ENCODE measurements at regions of chr17 and their contacts with region 1.

Region 1: DNA sequence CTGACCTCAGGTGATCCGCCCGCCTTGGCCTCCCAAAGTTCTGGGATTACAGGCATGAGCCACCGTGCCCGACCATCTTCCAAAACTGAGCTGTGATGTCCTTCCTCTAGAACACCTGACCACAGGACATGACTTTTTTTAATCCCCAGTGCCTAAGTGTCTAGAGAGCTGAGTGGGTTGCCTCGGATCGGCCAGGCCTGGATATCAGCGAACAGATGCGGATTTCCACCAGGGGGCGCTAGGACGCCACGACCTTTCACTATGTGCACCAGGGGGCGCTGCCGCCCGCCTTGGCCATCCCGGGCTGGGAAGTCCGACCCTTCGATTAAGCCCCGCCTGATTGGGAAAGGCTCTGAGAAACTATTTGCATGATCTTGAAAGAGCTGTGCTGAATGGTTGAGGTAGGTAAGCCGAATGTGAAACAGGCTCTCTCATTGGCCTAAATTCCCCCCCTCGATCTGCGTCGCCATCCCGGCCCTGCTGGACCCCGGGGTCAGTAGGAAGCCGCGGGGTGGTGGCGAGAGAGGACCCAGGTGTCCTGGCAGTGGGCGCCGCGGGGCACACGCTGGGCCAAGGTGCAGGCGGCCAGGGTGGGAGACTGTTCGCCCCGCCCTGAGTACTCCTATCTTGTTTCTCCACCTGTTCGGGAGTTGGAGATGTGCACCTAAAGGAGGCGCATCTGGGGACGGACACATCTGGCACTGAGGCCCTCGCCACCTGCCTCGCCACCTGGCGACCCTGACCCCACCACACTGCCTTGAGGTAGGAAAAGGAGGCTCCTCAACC is at the start of gene ACBD4:
- DNase-seq: peak; percentile 98
- H3K4me3 Mint-ChIP-seq: peak within 1 kb of the TSS; percentile 83
- H3K27ac Mint-ChIP-seq: peak within 1 kb of the TSS; percentile 67
- H3K4me1 Mint-ChIP-seq: peaks cover 13% of the 10 kb centered on the region
- H3K27me3 Mint-ChIP-seq: peaks cover 5% of the 10 kb centered on the region
- total RNA-seq, gene ACBD4: 12.5 to 13.8 TPM

Region 2: DNA sequence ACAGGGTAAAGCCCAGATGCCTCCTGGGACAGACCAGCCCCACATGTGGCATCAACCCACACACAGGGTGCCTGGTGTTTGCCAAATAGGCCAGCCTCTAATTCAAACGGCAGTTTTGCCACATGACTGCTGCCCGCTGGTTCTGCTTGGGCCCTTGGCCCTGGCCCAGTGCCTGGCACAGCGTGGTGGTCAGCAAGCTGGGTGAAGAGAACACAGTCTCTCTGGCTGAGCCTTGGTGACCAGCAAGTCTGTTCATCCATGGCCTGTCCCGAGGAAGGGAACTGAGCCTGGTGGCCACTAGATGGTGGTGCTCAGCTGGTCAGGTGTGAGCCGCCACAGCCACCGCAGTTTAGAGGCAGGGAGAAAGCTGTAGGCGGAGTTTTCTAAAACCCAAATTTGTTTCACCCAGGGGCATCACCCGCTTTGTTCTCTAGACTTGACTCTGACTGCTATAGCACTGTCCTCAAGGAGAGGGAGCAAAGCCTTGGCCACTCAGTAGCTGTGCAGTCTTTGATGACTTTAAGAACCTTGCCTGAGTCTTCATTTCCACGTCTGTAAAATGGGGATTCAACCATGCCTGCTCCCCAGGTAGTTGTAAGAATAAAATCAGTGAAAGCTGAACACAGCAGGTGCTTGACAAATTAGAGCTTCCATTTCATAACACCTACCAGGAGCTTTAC is 215.4 kb before region 1 on chr17:
- CTCF ChIA-PET with region 1: interaction called, 8 read pairs
- POLR2A ChIA-PET with region 1: no interaction called
- intact Hi-C with region 1: loop called (anchors 5 kb)
- DNase-seq: peak; percentile 85
- H3K4me3 Mint-ChIP-seq: no peak overlapping the region
- H3K27ac Mint-ChIP-seq: no peak overlapping the region
- H3K4me1 Mint-ChIP-seq: peaks cover 5% of the 10 kb centered on the region
- H3K27me3 Mint-ChIP-seq: peaks cover 10% of the 10 kb centered on the region

Region 3: DNA sequence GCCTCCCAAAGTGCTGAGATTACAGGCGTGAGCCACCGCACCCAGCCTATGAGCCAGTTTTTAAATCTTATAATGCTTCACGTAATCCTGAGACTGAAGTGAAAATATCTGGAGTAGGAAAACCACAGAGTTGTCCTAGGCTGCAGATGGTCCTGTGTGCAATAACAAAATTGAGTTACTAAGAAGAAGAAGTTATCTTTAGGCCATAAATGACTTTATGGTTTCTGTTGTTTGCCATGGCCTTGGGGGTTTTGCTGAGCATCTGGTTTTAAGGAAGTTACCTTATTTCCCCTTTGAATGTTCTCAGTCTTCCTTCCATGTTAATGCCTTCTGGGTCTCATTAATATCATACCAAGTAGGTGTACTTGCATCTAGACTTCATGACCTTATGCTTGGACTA is 57.7 kb before region 1 on chr17:
- CTCF ChIA-PET with region 1: interaction called, 13 read pairs
- POLR2A ChIA-PET with region 1: no interaction called
- intact Hi-C with region 1: no loop called
- DNase-seq: no peak
- H3K4me3 Mint-ChIP-seq: no peak overlapping the region
- H3K27ac Mint-ChIP-seq: no peak overlapping the region
- H3K4me1 Mint-ChIP-seq: peaks cover 31% of the 10 kb centered on the region
- H3K27me3 Mint-ChIP-seq: no peaks in the 10 kb centered on the region

Region 4: DNA sequence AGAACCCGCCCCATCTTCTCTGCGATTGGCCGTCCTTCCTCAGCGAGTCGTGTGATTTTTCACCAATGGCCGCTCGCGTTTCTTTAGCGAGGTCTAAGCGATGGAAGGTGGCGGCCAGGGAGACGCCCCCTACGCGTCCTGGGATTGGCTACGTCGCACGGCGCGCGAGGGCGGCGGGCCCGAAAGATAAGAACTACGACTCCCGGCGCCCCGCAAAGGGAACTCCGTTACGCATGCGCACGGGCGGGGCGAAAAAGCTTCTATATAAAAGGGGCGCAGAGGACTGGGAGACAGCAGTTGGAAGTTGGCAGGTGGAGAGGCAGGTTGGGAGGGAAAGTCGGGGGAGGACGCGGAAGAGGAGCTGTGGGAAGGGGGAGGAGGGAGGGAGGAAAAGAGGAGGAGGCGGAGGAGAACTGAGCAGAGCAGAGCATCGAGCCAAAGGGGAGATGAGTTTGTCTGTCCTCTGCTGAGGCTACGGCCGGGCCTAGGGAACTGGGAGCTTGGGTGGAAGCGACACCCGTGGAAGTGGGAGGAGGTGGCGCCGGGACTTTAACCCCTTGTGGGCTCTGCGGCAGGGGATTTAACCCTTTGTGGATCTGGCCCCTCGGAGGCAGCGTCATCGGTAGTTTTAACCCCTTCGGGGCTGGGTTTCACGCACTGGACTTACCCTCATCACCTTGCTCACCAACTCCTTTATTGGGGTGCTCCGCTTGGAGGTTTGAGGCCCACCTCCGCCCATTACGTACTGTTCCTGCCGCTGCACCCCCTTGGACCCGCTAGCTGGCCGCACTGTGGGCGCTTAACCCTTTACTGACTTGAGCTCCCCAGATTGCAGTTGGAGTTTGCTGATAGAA is 13.0 kb after region 1 on chr17 and contains the start of gene HEXIM1:
- CTCF ChIA-PET with region 1: interaction called, 316 read pairs
- POLR2A ChIA-PET with region 1: interaction called, 38 read pairs
- intact Hi-C with region 1: loop called (anchors 1 kb)
- DNase-seq: peak; percentile 99
- H3K4me3 Mint-ChIP-seq: peak within 1 kb of the TSS; percentile 99
- H3K27ac Mint-ChIP-seq: peak within 1 kb of the TSS; percentile 100
- H3K4me1 Mint-ChIP-seq: peaks cover 42% of the 10 kb centered on the region
- H3K27me3 Mint-ChIP-seq: no peaks in the 10 kb centered on the region
- total RNA-seq, gene HEXIM1: 24.9 to 25.4 TPM

Region 5: GRCh38 chr17:45190503-45191255 is 55.3 kb after region 1 on chr17:
- CTCF ChIA-PET with region 1: interaction called, 335 read pairs
- POLR2A ChIA-PET with region 1: no interaction called
- intact Hi-C with region 1: no loop called
- DNase-seq: no peak
- H3K4me3 Mint-ChIP-seq: no peak overlapping the region
- H3K27ac Mint-ChIP-seq: no peak overlapping the region
- H3K4me1 Mint-ChIP-seq: no peaks in the 10 kb centered on the region
- H3K27me3 Mint-ChIP-seq: no peaks in the 10 kb centered on the region

Region 6: GRCh38 chr17:45228763-45229539 is 93.6 kb after region 1 on chr17:
- CTCF ChIA-PET with region 1: interaction called, 43 read pairs
- POLR2A ChIA-PET with region 1: interaction called, 3 read pairs
- intact Hi-C with region 1: no loop called
- DNase-seq: peak; percentile 96
- H3K4me3 Mint-ChIP-seq: peak overlapping the region; percentile 100
- H3K27ac Mint-ChIP-seq: peak overlapping the region; percentile 100
- H3K4me1 Mint-ChIP-seq: peaks cover 86% of the 10 kb centered on the region
- H3K27me3 Mint-ChIP-seq: no peaks in the 10 kb centered on the region